ENCODE measurements at regions of chr16 and their contacts with region 1.

Region 1: DNA sequence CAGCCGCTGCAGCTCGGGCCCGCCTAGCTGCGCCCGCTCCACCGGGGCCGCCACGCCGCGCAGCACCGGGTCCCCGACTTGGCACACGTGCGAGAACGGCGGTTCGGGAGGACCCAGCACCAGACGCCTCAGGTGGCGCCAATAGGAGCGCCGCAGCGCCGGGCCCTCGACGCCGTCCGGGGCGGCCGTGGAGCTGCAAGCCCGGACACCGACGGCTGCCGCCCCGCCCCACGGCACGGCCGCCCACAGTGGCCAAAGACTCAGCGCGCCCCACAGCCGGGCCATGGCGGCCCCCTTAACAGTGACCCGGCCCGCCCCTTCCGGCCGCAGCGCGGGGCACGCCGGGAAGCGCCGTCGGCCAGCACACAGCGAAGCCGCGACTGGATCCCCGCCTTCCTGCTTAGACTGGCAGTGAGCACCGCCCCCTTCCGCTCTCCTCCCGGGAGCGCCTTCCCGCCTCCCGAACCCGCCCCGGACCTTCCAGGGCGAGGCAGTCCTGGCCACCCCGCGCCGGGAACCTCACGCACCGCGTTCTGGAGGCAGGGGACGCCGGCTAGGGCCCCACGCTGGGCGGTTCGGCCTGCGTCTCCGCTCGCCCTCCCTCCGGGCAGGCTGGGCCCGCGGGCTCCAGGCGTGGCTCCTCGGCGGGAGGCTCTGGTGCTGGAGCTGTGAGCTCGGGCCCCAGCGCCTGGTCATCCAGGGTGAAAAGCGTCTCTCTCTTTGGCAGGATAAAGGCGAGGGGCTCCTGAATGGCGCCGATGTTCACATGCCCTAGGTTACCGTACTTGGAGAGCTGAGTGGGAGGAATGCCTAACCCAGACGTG is at the start of gene PDF:
- DNase-seq: peak; percentile 61 to 91 (median 72)
- ATAC-seq: peak; percentile 97
- H3K4me3 ChIP-seq: peak within 1 kb of the TSS; percentile 64
- H3K4me3 Mint-ChIP-seq: peak within 1 kb of the TSS; percentile 69 to 87 (median 76)
- H3K27ac ChIP-seq: peak within 1 kb of the TSS; percentile 90
- H3K27ac Mint-ChIP-seq: peak within 1 kb of the TSS; percentile 36 to 80 (median 62)
- H3K4me1 ChIP-seq: peaks cover 13 to 37% of the 10 kb centered on the region in 2 donors
- H3K4me1 Mint-ChIP-seq: peaks cover 16 to 72% (median 54%) of the 10 kb centered on the region in 7 donors
- H3K27me3 ChIP-seq: no peaks in the 10 kb centered on the region
- H3K27me3 Mint-ChIP-seq: no peaks in the 10 kb centered on the region
- total RNA-seq, gene PDF: 4.6 to 11.8 (median 9.5) TPM

Region 2: GRCh38 chr16:69132424-69133252 is 197.9 kb before region 1 on chr16 and contains the starts of genes CHTF8 and UTP4:
- CTCF ChIA-PET with region 1: no interaction called
- POLR2A ChIA-PET with region 1: interaction called, 4 read pairs
- intact Hi-C with region 1: loop called in 1 of 2 experiments (anchors 1 kb)
- DNase-seq: peak; percentile 81 to 91 (median 87)
- ATAC-seq: peak; percentile 95
- H3K4me3 ChIP-seq: peak within 1 kb of the TSS; percentile 80
- H3K4me3 Mint-ChIP-seq: peak within 1 kb of the TSS; percentile 91 to 97 (median 94)
- H3K27ac ChIP-seq: peak within 1 kb of the TSS; percentile 88
- H3K27ac Mint-ChIP-seq: peak within 1 kb of the TSS; percentile 85 to 97 (median 95)
- H3K4me1 ChIP-seq: peaks cover 12 to 23% of the 10 kb centered on the region in 2 donors
- H3K4me1 Mint-ChIP-seq: peaks cover 16 to 71% (median 61%) of the 10 kb centered on the region in 7 donors
- H3K27me3 ChIP-seq: no peaks in the 10 kb centered on the region
- H3K27me3 Mint-ChIP-seq: no peaks in the 10 kb centered on the region
- total RNA-seq, gene CHTF8: 53.3 to 142 (median 133) TPM
- total RNA-seq, gene UTP4: 31.9 to 56.5 (median 35.1) TPM

Region 3: GRCh38 chr16:69632836-69633235 is 302.3 kb after region 1 on chr16:
- CTCF ChIA-PET with region 1: no interaction called
- POLR2A ChIA-PET with region 1: no interaction called
- intact Hi-C with region 1: no loop called
- DNase-seq: no peak
- ATAC-seq: no peak
- H3K4me3 ChIP-seq: no peak overlapping the region
- H3K4me3 Mint-ChIP-seq: no peak overlapping the region
- H3K27ac ChIP-seq: no peak overlapping the region
- H3K27ac Mint-ChIP-seq: no peak overlapping the region
- H3K4me1 ChIP-seq: no peaks in the 10 kb centered on the region
- H3K4me1 Mint-ChIP-seq: peaks cover 0 to 2% (median 0%) of the 10 kb centered on the region in 7 donors
- H3K27me3 ChIP-seq: no peaks in the 10 kb centered on the region
- H3K27me3 Mint-ChIP-seq: no peaks in the 10 kb centered on the region

Region 4: DNA sequence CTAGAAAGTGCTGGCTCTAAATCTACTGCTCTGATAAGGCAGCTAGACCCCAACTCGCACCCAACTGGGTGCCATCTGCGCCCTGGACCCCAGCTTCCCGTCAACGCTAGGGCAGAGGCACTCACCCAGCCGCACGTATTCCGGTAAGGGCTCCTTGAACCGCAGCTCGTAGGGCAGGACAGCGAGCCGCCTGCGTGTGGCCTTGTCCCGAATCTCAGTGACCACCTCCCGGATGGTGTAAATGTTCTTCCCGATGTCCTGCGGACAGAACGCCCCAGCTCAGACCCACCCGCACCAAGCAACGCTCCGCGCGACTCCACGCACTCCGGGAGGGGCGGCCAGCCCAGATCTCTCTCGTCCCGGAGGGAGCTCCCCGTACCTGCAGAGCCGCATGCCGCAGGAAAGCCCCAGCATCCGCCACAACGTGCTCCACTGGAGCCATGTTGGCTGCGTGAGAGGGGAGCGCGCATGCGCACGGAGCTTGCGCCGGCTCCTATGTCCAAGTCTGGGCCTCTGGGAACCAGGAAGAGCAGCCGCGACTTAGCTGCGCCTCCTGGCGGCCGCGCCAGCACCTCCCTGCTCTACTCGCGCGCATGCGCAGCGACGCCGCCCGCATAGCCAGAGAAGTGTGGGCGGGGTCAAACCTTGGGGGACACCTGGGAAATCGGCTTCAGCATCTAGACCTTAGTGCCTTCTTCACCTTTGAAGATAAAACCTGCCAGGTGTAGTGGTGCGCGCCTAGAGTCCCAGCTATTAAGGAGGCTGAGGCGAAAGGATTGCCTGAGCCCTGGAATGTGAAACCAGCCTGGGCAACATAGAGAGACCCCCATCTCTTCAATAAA is 424.2 kb after region 1 on chr16 and contains the start of gene NOB1:
- CTCF ChIA-PET with region 1: no interaction called
- POLR2A ChIA-PET with region 1: no interaction called
- intact Hi-C with region 1: no loop called
- DNase-seq: peak; percentile 96 to 98 (median 97)
- ATAC-seq: peak; percentile 97
- H3K4me3 ChIP-seq: peak within 1 kb of the TSS; percentile 91
- H3K4me3 Mint-ChIP-seq: peak within 1 kb of the TSS; percentile 98 to 100 (median 100)
- H3K27ac ChIP-seq: peak within 1 kb of the TSS; percentile 89
- H3K27ac Mint-ChIP-seq: peak within 1 kb of the TSS; percentile 92 to 100 (median 98)
- H3K4me1 ChIP-seq: peaks cover 13 to 17% of the 10 kb centered on the region in 2 donors
- H3K4me1 Mint-ChIP-seq: peaks cover 23 to 36% (median 26%) of the 10 kb centered on the region in 7 donors
- H3K27me3 ChIP-seq: no peaks in the 10 kb centered on the region
- H3K27me3 Mint-ChIP-seq: peaks cover 0 to 7% (median 0%) of the 10 kb centered on the region in 5 donors
- total RNA-seq, gene NOB1: 24.1 to 72.8 (median 45.0) TPM